ENCODE measurements at regions of chr10 and their contacts with region 1.

Region 1: DNA sequence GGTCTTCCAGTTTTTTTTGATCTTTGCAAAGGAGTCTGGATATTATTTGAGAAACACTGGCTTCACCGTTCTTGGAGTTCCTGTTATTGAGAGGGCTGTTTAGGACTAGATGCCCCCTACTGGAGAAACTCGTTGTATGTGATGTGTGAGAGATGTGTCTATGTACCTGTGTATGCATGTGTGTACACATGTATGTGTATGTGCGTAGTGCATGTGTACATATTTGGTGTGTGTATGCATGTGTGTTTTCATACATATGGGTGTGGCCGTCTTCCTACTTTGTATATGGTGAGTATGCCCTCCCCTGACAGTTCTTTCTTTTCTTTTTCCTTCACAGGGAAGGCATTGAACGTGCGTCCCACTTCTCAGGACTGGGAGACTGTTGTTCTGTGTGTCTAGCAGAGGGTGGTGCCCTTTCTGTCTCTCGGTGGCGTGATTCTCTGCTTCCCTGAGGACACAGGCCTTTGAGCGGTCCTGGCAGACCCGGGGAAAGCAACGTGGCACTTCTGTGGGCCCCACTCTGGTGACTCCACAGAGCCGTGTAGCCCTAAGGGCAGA is 3.0 kb upstream of the CALHM3 start:
- DNase-seq: no peak
- H3K4me3 ChIP-seq: no peak overlapping the region
- CTCF ChIP-seq: peak; percentile 72

Region 2: GRCh38 chr10:103416436-103417147 is 65.5 kb before region 1 on chr10:
- CTCF ChIA-PET with region 1: interaction called, 250 read pairs
- POLR2A ChIA-PET with region 1: no interaction called
- DNase-seq: no peak
- H3K4me3 ChIP-seq: no peak overlapping the region
- CTCF ChIP-seq: peak; percentile 46

Region 3: GRCh38 chr10:103433858-103434257 is 48.2 kb before region 1 on chr10:
- CTCF ChIA-PET with region 1: interaction called, 12 read pairs
- POLR2A ChIA-PET with region 1: no interaction called
- DNase-seq: no peak
- H3K4me3 ChIP-seq: no peak overlapping the region
- CTCF ChIP-seq: no peak

Region 4: GRCh38 chr10:103451831-103452505 is 30.1 kb before region 1 on chr10 and contains the start of gene CALHM2:
- CTCF ChIA-PET with region 1: interaction called, 84 read pairs
- POLR2A ChIA-PET with region 1: no interaction called
- DNase-seq: no peak
- H3K4me3 ChIP-seq: peak within 1 kb of the TSS; percentile 77
- CTCF ChIP-seq: no peak

Region 5: GRCh38 chr10:103542764-103543616 is 60.9 kb after region 1 on chr10:
- CTCF ChIA-PET with region 1: interaction called, 10 read pairs
- POLR2A ChIA-PET with region 1: no interaction called
- DNase-seq: no peak
- H3K4me3 ChIP-seq: peak overlapping the region; percentile 45
- CTCF ChIP-seq: peak; percentile 51

Measured in AG04449 (cell line).